ENCODE measurements at regions of chr22 and their contacts with region 1.

Region 1: DNA sequence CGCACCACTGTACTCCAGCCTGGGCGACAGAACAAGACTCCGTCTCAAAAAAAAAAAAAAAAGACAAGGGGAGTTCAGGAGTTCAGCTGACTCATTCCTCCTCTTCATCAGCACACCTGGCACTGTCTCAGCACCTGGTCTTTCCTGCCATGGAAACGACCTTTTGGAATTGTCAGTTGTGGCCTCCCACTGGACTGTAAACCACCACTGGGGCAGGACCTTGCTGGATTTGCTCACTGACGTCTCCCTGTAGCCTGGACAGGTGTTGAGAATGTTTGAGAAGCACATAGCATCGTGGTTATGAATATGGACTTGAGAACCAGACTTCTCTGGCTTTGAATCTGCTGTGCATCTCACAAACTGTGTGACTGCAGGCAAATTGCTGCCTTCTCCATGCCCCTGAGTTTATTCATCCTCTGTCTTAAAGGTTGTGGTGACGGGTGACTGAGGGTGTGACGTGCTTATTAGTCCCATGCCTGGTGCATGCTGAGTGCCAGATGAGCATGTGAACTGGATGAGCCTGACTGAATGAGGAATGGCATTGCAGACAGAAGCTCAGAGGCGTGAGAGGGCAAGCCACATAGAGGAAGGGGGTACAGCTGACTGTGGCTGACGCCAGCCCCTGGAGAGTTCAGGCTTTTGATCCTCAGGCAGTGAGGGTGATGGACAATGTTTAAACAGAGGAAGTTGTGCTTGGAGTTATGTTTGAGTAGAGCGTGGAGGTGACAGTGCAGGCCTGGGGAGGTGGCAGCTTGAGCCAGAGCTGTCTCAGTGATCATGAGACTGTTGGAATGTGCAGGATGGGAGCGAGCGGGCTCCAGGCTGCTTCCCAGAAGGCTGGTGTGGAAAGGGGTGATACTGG is 12.7 kb downstream of the TOM1 start:
- DNase-seq: no peak
- H3K4me3 ChIP-seq: no peak overlapping the region
- H3K4me3 Mint-ChIP-seq: peak overlapping the region in 4 of 8 donors; percentile 2 to 42 (median 34)
- H3K27ac ChIP-seq: no peak overlapping the region
- H3K27ac Mint-ChIP-seq: peak overlapping the region; percentile 6 to 84 (median 47)
- H3K4me1 ChIP-seq: peaks cover 87% of the 10 kb centered on the region
- H3K4me1 Mint-ChIP-seq: peaks cover 54 to 87% (median 79%) of the 10 kb centered on the region in 4 donors
- H3K27me3 ChIP-seq: no peaks in the 10 kb centered on the region
- H3K27me3 Mint-ChIP-seq: no peaks in the 10 kb centered on the region

Region 2: GRCh38 chr22:35257321-35258190 is 54.9 kb before region 1 on chr22 and contains the start of gene HMGXB4:
- CTCF ChIA-PET with region 1: interaction called, 3 read pairs
- POLR2A ChIA-PET with region 1: interaction called, 24 read pairs
- intact Hi-C with region 1: no loop called
- DNase-seq: peak; percentile 86 to 90 (median 88)
- H3K4me3 ChIP-seq: peak within 1 kb of the TSS; percentile 63 to 73
- H3K4me3 Mint-ChIP-seq: peak within 1 kb of the TSS; percentile 93 to 96 (median 94)
- H3K27ac ChIP-seq: peak within 1 kb of the TSS; percentile 92
- H3K27ac Mint-ChIP-seq: peak within 1 kb of the TSS; percentile 90 to 98 (median 97)
- H3K4me1 ChIP-seq: peaks cover 18% of the 10 kb centered on the region
- H3K4me1 Mint-ChIP-seq: peaks cover 20 to 36% (median 25%) of the 10 kb centered on the region in 4 donors
- H3K27me3 ChIP-seq: no peaks in the 10 kb centered on the region
- H3K27me3 Mint-ChIP-seq: no peaks in the 10 kb centered on the region
- total RNA-seq, gene HMGXB4: 22.1 to 25.3 TPM

Region 3: DNA sequence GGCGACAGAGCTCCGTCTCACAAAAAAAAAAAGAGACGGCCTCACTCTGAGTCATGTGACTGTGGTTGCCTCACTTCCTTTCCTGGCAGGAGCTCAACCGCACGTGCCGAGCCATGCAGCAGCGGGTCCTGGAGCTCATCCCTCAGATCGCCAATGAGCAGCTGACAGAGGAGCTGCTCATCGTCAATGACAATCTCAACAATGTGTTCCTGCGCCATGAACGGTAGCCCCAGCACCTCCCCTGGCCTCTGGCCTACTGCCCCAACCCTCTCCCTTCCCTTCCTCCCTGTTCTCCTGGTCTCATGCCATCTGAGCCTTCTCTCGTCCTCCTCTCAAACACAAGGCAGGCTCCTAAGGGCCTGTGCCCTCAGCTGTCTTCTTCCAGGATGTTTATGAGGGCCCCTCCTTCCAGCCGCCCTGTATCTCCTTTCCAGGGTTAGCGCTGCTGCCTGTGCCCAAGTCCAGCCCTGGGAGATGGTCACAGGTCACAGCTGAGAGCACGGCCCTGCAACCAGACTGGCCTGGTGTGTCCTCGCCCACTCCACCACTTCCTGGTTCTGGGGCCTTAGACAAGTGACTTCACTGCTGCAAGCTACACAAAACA is 17.9 kb after region 1 on chr22:
- CTCF ChIA-PET with region 1: interaction called, 9 read pairs
- POLR2A ChIA-PET with region 1: interaction called, 11 read pairs
- intact Hi-C with region 1: no loop called
- DNase-seq: peak; percentile 50 to 76 (median 52)
- H3K4me3 ChIP-seq: no peak overlapping the region
- H3K4me3 Mint-ChIP-seq: peak overlapping the region; percentile 24 to 81 (median 70)
- H3K27ac ChIP-seq: peak overlapping the region; percentile 30
- H3K27ac Mint-ChIP-seq: peak overlapping the region; percentile 86 to 97 (median 93)
- H3K4me1 ChIP-seq: peaks cover 49% of the 10 kb centered on the region
- H3K4me1 Mint-ChIP-seq: peaks cover 17 to 59% (median 38%) of the 10 kb centered on the region in 4 donors
- H3K27me3 ChIP-seq: no peaks in the 10 kb centered on the region
- H3K27me3 Mint-ChIP-seq: no peaks in the 10 kb centered on the region

Region 4: GRCh38 chr22:35728639-35729308 is 416.3 kb after region 1 on chr22:
- CTCF ChIA-PET with region 1: no interaction called
- POLR2A ChIA-PET with region 1: no interaction called
- intact Hi-C with region 1: no loop called
- DNase-seq: no peak
- H3K4me3 ChIP-seq: no peak overlapping the region
- H3K4me3 Mint-ChIP-seq: no peak overlapping the region
- H3K27ac ChIP-seq: no peak overlapping the region
- H3K27ac Mint-ChIP-seq: no peak overlapping the region
- H3K4me1 ChIP-seq: no peaks in the 10 kb centered on the region
- H3K4me1 Mint-ChIP-seq: no peaks in the 10 kb centered on the region
- H3K27me3 ChIP-seq: no peaks in the 10 kb centered on the region
- H3K27me3 Mint-ChIP-seq: peaks cover 6 to 7% of the 10 kb centered on the region in 2 donors